ENCODE measurements at regions of chr17 and their contacts with region 1.

Region 1: GRCh38 chr17:37373530-37374159 is 2.1 kb upstream of the C17orf78 start:
- DNase-seq: peak; percentile 74
- ATAC-seq: peak; percentile 98
- H3K4me3 Mint-ChIP-seq: no peak overlapping the region
- H3K27ac Mint-ChIP-seq: 0 out of 2 replicates have a peak overlapping the region, but pooled peaks have one; percentile 2
- H3K4me1 Mint-ChIP-seq: 0 out of 2 replicates have a peak, but pooled peaks cover 3% of the 10 kb centered on the region
- H3K27me3 Mint-ChIP-seq: no peaks in the 10 kb centered on the region
- CTCF ChIP-seq: peak; percentile 71

Region 2: GRCh38 chr17:37123941-37124820 is 249.5 kb before region 1 on chr17:
- CTCF ChIA-PET with region 1: no interaction called
- POLR2A ChIA-PET with region 1: no interaction called
- DNase-seq: no peak
- ATAC-seq: no peak
- H3K4me3 Mint-ChIP-seq: no peak overlapping the region
- H3K27ac Mint-ChIP-seq: peak overlapping the region; percentile 29
- H3K4me1 Mint-ChIP-seq: peaks cover 18% of the 10 kb centered on the region
- H3K27me3 Mint-ChIP-seq: no peaks in the 10 kb centered on the region
- CTCF ChIP-seq: no peak

Region 3: GRCh38 chr17:37174205-37174604 is 199.4 kb before region 1 on chr17:
- CTCF ChIA-PET with region 1: interaction called, 10 read pairs
- POLR2A ChIA-PET with region 1: no interaction called
- DNase-seq: peak; percentile 32
- ATAC-seq: peak; percentile 93
- H3K4me3 Mint-ChIP-seq: no peak overlapping the region
- H3K27ac Mint-ChIP-seq: no peak overlapping the region; the same call in 1 of the 2 replicates
- H3K4me1 Mint-ChIP-seq: peaks cover 43% of the 10 kb centered on the region
- H3K27me3 Mint-ChIP-seq: no peaks in the 10 kb centered on the region
- CTCF ChIP-seq: 0 out of 2 replicates have a peak, but pooled peaks have one; percentile 14

Region 4: GRCh38 chr17:37246085-37246484 is 127.6 kb before region 1 on chr17:
- CTCF ChIA-PET with region 1: no interaction called
- POLR2A ChIA-PET with region 1: no interaction called
- DNase-seq: no peak
- ATAC-seq: no peak
- H3K4me3 Mint-ChIP-seq: no peak overlapping the region
- H3K27ac Mint-ChIP-seq: no peak overlapping the region
- H3K4me1 Mint-ChIP-seq: no peaks in the 10 kb centered on the region
- H3K27me3 Mint-ChIP-seq: no peaks in the 10 kb centered on the region
- CTCF ChIP-seq: no peak

Region 5: GRCh38 chr17:37299257-37299980 is 74.2 kb before region 1 on chr17:
- CTCF ChIA-PET with region 1: interaction called, 28 read pairs
- POLR2A ChIA-PET with region 1: no interaction called
- DNase-seq: no peak
- ATAC-seq: no peak; the same call in 1 of the 2 replicates
- H3K4me3 Mint-ChIP-seq: peak overlapping the region; percentile 19
- H3K27ac Mint-ChIP-seq: peak overlapping the region; percentile 95
- H3K4me1 Mint-ChIP-seq: peaks cover 44% of the 10 kb centered on the region
- H3K27me3 Mint-ChIP-seq: no peaks in the 10 kb centered on the region
- CTCF ChIP-seq: no peak

Region 6: DNA sequence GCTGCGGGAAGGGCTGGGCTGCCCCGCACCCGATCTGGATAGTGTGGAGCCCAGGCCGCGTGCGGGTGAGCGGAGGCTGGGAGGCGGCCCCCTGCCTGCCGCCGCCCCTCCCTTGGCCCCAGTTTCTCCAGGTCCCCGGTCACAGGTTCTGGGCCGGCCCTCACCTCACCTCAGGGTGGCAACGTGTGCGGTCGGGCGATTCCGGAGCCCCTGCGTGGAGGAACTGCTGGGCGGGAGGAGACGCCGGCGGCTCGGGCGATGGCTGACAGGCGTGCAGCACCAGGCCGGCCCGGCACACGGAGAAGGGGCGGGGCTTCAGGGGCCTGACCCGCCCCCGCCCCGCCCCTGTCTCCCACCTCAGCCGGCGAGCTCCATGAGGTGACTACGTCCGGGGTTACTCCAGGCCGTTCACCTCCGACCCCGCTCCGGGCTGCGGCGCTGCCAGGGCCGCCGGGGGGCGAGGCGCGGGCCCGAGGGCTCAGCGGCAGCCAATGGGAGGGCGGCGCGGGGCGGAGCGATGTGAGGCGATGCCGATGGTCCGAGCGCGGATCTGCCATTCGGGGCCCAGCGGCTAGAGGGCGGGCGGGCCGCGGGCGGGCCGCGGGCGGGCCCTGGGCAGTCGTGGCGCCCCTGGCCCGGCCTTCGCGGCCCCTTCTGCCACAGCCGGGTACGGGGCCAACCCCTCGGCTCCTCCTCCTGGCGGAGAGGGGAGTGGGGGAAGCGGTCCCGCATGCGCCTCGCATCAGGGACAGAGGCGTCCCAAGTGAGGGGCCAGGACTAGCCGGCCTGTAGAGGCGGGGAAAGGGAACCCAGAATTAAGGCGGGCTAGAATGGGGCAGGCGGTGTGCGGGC is 14.6 kb before region 1 on chr17:
- CTCF ChIA-PET with region 1: interaction called, 58 read pairs
- POLR2A ChIA-PET with region 1: interaction called, 4 read pairs
- DNase-seq: peak; percentile 98
- ATAC-seq: peak; percentile 93
- H3K4me3 Mint-ChIP-seq: peak overlapping the region; percentile 97
- H3K27ac Mint-ChIP-seq: peak overlapping the region; percentile 99
- H3K4me1 Mint-ChIP-seq: peaks cover 36% of the 10 kb centered on the region
- H3K27me3 Mint-ChIP-seq: no peaks in the 10 kb centered on the region
- CTCF ChIP-seq: no peak

Region 7: DNA sequence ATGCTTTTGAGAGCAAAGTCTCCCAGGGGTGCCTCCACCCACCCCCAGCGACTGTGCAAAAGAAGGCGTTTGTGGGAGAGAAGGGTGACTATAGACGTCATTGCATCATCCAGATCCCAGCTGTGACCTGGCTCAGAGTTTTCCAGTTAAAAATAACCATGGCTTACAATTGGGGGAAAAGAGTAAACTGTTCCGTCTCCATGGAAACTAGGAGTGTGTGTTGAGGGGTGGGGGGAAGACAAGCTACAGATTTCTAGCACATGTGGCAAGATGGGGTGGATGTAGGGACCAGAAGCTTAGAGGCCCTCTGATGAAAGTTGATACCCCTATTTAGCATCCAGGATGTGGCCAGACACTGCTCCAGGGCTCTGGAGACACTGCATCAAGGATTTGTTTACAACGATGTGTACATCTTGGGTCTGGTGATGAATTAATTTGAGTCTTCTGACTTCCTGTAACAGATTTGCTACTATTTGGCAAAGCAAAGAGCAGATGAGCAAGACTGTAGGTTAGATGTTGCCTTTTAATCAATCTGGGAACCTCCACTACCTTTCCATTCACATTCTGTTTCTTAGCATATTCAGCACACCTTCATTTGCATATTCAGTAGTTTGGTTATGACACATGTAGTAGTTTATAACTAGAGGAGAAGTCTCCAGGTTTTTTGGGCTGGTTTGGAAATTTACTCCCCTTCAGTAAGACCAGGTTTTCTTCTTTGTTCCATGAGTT is 109.8 kb after region 1 on chr17:
- CTCF ChIA-PET with region 1: interaction called, 12 read pairs
- POLR2A ChIA-PET with region 1: interaction called, 4 read pairs
- DNase-seq: no peak
- ATAC-seq: peak; percentile 41; the same call in 1 of the 2 replicates
- H3K4me3 Mint-ChIP-seq: no peak overlapping the region
- H3K27ac Mint-ChIP-seq: peak overlapping the region; percentile 45; the same call in 1 of the 2 replicates
- H3K4me1 Mint-ChIP-seq: peaks cover 34% of the 10 kb centered on the region
- H3K27me3 Mint-ChIP-seq: peaks cover 4% of the 10 kb centered on the region; the same call in 1 of the 2 replicates
- CTCF ChIP-seq: no peak

Region 8: DNA sequence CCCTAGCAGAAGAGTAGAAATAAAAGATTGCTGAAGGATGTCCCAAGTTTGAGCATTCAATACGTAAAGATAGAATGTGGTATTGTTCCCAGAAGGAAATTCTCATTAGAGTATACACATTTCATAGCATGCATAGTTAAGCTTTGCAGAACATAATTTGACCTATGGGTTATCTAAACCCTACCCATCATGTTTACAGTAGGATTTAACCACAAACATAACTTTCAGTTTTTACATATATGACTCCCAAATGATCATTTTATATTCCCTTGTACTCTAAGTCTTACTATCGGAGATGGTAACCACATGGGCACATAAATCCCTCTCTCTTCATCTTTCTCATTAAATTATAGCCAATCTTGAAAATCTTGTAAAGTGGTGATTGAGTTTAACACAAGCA is 184.7 kb after region 1 on chr17:
- CTCF ChIA-PET with region 1: no interaction called
- POLR2A ChIA-PET with region 1: no interaction called
- DNase-seq: no peak
- ATAC-seq: no peak
- H3K4me3 Mint-ChIP-seq: no peak overlapping the region
- H3K27ac Mint-ChIP-seq: no peak overlapping the region
- H3K4me1 Mint-ChIP-seq: peaks cover 14% of the 10 kb centered on the region
- H3K27me3 Mint-ChIP-seq: no peaks in the 10 kb centered on the region
- CTCF ChIP-seq: no peak

Measured in WTC11 (cell line).